Kidney (tissue), 22 donors: ENCODE measurements at regions of chr3 and their contacts with region 1.

Region 1: GRCh38 chr3:107846279-107846852 is 244.5 kb downstream of the CD47 start:
- DNase-seq: peak; percentile 67 to 82 (median 74)
- H3K4me3 ChIP-seq: no peak overlapping the region
- H3K27ac ChIP-seq: peak overlapping the region in 1 of 2 donors; percentile 26
- H3K4me1 ChIP-seq: peaks cover 0 to 5% (median 0%) of the 10 kb centered on the region in 3 donors
- H3K27me3 ChIP-seq: no peaks in the 10 kb centered on the region
- CTCF ChIP-seq: peak; percentile 69

Region 2: GRCh38 chr3:107753480-107753879 is 92.9 kb before region 1 on chr3:
- intact Hi-C with region 1: loop called (anchors 10 kb)
- DNase-seq: peak in 4 of 5 donors; percentile 47 to 74 (median 56)
- H3K4me3 ChIP-seq: no peak overlapping the region
- H3K27ac ChIP-seq: no peak overlapping the region
- H3K4me1 ChIP-seq: no peaks in the 10 kb centered on the region
- H3K27me3 ChIP-seq: no peaks in the 10 kb centered on the region
- CTCF ChIP-seq: peak; percentile 65